ENCODE measurements at regions of chr14 and their contacts with region 1.

Region 1: GRCh38 chr14:21257394-21257909 is 11.8 kb downstream of the HNRNPC start:
- DNase-seq: no peak
- ATAC-seq: peak; percentile 23
- H3K4me3 ChIP-seq: no peak overlapping the region
- H3K27ac ChIP-seq: no peak overlapping the region
- H3K4me1 ChIP-seq: peaks cover 4 to 5% of the 10 kb centered on the region in 2 experiments; a peak in 4 of 5 replicates
- H3K27me3 ChIP-seq: no peaks in the 10 kb centered on the region
- CTCF ChIP-seq: no peak
- EP300 ChIP-seq: no peak
- POLR2A ChIP-seq: peak; percentile 18; the same call in 1 of the 2 replicates
- RAD21 ChIP-seq: no peak

Region 2: DNA sequence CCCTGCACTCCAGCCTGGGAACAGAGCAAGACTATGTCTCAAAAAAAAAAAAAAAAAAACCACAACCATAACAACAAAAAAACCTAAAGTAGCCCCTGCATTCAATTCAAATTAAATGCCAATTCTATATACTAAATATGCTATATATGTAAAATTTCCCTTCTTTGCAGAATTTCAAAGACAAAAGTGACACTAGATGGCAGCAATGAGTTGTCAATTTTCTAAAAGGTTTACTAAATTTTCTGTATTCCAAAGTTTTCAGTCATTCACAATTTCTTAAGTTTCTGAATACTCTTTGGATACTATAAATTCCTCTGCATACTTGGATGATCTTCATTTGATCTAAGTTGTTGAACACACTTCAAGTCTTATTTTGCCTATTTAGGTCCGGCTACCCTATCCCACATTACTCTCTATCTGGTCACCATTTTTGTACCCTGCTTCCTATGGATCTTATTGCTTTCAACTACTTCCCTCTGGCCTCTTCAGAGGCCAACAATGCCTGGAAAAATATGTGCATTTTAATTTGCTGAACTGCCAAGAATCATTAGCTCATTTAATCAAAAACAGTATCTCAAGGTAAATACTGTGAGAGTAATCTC is 16.1 kb before region 1 on chr14:
- CTCF ChIA-PET with region 1: no interaction called
- POLR2A ChIA-PET with region 1: interaction called, 18 read pairs
- in situ Hi-C with region 1: no loop called
- intact Hi-C with region 1: no loop called
- DNase-seq: no peak
- ATAC-seq: no peak
- H3K4me3 ChIP-seq: no peak overlapping the region
- H3K27ac ChIP-seq: no peak overlapping the region
- H3K4me1 ChIP-seq: peaks cover 0 to 2% of the 10 kb centered on the region in 2 experiments; a peak in 1 of 5 replicates
- H3K27me3 ChIP-seq: no peaks in the 10 kb centered on the region
- CTCF ChIP-seq: peak in 2 of 3 experiments; percentile 6 to 35; a peak in 2 of 6 replicates
- EP300 ChIP-seq: no peak
- POLR2A ChIP-seq: no peak
- RAD21 ChIP-seq: no peak

Measured in K562 (cell line).